ENCODE measurements at regions of chr19 and their contacts with region 1.

Region 1: GRCh38 chr19:48321622-48322591 is 3.4 kb upstream of the EMP3 start:
- DNase-seq: peak; percentile 99
- H3K4me3 ChIP-seq: peak overlapping the region; percentile 57 to 76 (median 63)
- H3K27ac ChIP-seq: peak overlapping the region; percentile 96
- H3K4me1 ChIP-seq: peaks cover 30% of the 10 kb centered on the region
- H3K27me3 ChIP-seq: no peaks in the 10 kb centered on the region
- CTCF ChIP-seq: peak in 1 of 2 donors; percentile 29

Region 2: DNA sequence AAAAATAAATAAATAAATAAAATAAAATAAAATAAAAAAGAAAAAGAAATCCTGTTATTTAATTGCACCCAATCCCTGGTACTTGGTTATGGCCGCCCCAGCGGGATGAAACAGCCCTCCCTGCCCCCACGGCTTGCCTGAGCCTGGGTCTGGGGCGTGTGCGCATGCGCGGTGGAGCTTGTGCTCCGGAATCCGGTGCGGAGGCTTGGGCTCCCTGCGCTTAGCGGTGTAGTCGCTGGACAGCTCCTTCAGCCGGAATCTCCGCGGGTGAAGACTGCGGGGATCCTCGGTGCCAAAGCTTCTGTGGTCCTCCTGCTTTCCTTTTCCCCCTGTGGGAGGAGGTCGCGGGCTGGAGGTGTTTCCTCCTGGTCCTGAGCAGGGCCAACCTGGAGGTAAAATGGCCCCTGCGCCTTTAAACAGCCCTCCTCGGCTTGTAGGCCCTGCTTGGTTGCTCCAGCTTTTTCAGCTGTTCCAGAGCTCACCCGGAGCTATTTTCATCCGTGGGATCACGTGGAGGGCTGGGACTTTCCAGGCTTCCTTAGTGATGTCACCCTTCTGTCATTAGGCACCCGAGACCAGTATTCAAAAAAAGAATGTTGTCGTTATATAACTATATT is 211.4 kb before region 1 on chr19 and contains the start of gene PLA2G4C:
- CTCF ChIA-PET with region 1: no interaction called
- dilution Hi-C with region 1: no loop called
- in situ Hi-C with region 1: no loop called
- intact Hi-C with region 1: no loop called
- DNase-seq: peak; percentile 85
- H3K4me3 ChIP-seq: peak within 1 kb of the TSS; percentile 42 to 44 (median 44)
- H3K27ac ChIP-seq: peak within 1 kb of the TSS; percentile 63
- H3K4me1 ChIP-seq: peaks cover 11% of the 10 kb centered on the region
- H3K27me3 ChIP-seq: no peaks in the 10 kb centered on the region
- CTCF ChIP-seq: no peak
- total RNA-seq, gene PLA2G4C: 2.7 to 3.2 TPM

Region 3: GRCh38 chr19:48333467-48334384 is 11.8 kb after region 1 on chr19:
- CTCF ChIA-PET with region 1: interaction called, 30 read pairs
- dilution Hi-C with region 1: no loop called
- in situ Hi-C with region 1: no loop called
- intact Hi-C with region 1: loop called (anchors 1 kb)
- DNase-seq: peak; percentile 87
- H3K4me3 ChIP-seq: peak overlapping the region; percentile 15 to 48 (median 44)
- H3K27ac ChIP-seq: peak overlapping the region; percentile 45
- H3K4me1 ChIP-seq: peaks cover 35% of the 10 kb centered on the region
- H3K27me3 ChIP-seq: no peaks in the 10 kb centered on the region
- CTCF ChIP-seq: peak; percentile 54 to 89

Region 4: GRCh38 chr19:48370955-48371354 is 49.0 kb after region 1 on chr19:
- CTCF ChIA-PET with region 1: no interaction called
- dilution Hi-C with region 1: no loop called
- in situ Hi-C with region 1: no loop called
- intact Hi-C with region 1: no loop called
- DNase-seq: no peak
- H3K4me3 ChIP-seq: no peak overlapping the region
- H3K27ac ChIP-seq: no peak overlapping the region
- H3K4me1 ChIP-seq: peaks cover 5% of the 10 kb centered on the region
- H3K27me3 ChIP-seq: no peaks in the 10 kb centered on the region
- CTCF ChIP-seq: no peak

Region 5: DNA sequence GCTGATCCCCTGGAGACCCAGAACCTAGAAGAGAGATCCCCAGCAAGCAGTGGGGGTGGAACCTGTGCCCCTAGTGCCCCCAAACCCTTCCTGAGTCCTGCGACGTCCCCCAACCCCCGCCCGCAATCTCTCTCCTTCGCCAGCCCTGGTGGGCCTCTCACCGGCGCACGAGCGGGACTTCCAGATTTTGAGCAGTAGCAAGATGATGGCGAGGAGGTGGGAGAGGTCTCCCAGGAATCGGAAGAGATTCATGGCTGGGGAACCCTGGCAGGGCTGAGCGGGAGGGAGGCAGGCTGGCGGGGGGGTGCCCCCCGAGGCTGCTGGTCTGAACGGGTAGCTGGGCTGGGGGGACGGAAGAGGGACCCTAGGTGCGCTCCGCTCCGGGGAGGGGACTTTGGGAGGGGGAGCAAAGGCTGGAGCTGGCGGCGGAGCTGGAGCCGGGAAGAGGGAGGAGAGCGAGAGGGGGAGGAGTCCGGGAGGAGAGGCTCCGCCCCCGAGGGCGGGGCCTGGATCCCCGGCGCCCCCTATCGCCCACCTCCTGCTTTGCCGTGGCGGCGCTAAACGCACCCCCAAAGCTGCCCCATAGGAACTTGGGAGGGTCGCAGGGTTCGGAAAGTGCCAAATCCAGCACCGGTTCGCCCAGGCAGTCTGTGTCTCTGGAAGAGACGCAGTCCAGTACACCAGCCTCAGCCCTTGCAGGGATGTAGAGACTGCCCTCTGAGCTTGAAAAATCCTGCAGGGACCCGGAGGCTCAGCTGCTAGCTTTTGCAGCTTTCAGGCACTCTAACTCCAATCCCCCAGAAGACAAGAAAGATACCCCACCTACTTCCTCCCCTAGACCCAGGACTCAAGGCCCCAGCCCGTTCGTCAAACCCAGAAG is 69.4 kb after region 1 on chr19 and contains the start of gene KDELR1:
- CTCF ChIA-PET with region 1: interaction called, 6 read pairs
- dilution Hi-C with region 1: no loop called
- in situ Hi-C with region 1: no loop called
- intact Hi-C with region 1: loop called (anchors 1 kb)
- DNase-seq: peak; percentile 58
- H3K4me3 ChIP-seq: peak within 1 kb of the TSS; percentile 63 to 94 (median 93)
- H3K27ac ChIP-seq: peak within 1 kb of the TSS; percentile 87
- H3K4me1 ChIP-seq: peaks cover 12% of the 10 kb centered on the region
- H3K27me3 ChIP-seq: peaks cover 10% of the 10 kb centered on the region
- CTCF ChIP-seq: peak; percentile 70 to 95
- total RNA-seq, gene KDELR1: 73.2 to 171 TPM

Region 6: DNA sequence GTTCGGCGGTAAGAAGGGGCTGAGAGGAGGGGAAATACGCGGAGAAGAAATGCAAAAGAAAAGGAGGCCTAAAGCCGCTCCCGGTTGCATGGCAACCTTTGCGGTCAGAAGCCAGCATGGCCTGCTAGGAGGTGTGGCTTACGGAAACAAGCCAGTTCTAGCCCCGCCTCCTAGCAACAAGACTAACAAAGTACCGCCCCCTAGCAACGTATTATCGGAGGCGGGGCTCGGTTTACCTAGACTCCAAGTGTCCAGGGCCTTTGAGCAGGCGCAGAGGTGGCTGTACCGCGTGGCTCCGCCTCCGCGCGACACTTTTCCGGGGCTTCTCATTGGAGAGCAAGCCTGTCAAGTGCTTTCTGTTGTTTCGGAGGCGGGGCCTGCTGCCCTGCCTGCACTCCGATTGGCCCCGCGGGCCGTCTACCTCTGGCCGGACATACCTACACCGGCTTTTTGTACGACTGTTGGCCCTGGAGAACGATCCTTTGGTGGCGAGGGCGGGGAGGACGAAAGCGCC is 146.9 kb after region 1 on chr19:
- CTCF ChIA-PET with region 1: no interaction called
- dilution Hi-C with region 1: no loop called
- in situ Hi-C with region 1: no loop called
- intact Hi-C with region 1: loop called (anchors 5 kb)
- DNase-seq: peak; percentile 100
- H3K4me3 ChIP-seq: peak overlapping the region; percentile 79 to 94 (median 86)
- H3K27ac ChIP-seq: peak overlapping the region; percentile 87
- H3K4me1 ChIP-seq: peaks cover 39% of the 10 kb centered on the region
- H3K27me3 ChIP-seq: no peaks in the 10 kb centered on the region
- CTCF ChIP-seq: no peak

Measured in mammary epithelial cell (primary cell).